ENCODE measurements at regions of chr9 and their contacts with region 1.

Region 1: DNA sequence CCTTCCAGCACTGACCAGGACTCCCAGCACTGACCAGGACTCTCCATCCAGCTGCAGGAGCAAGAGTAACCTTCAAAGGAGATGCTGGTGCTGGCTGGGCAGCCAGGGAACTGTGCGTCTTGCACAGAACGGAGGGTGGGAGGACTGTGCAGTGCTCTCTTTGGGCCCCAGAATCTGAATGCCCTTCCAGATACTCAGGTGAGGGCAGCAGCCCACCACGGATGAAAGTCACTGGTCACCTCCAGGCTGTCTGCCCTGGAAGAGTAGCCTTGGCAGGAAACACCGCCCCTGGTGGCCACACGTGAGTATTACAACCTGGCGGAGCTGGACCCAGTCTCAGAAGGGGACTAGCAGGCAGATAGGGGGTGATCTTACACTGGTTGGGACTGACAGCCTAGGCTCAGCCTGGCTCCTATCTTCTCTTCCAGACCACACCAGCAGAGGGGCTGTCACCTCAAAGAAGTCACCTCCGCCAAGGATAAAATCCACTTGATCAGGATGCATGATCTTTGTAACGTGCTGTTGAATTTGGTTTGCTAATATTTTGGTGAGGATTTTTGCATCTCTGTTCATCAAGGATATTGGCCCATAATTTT is 4.8 kb upstream of the SARDH start:
- DNase-seq: peak; percentile 84 to 99
- H3K4me3 ChIP-seq: no peak overlapping the region
- H3K27ac ChIP-seq: no peak overlapping the region
- H3K4me1 ChIP-seq: peaks cover 0 to 10% (median 5%) of the 10 kb centered on the region in 4 experiments; a peak in 6 of 7 replicates
- H3K27me3 ChIP-seq: no peaks in the 10 kb centered on the region
- CTCF ChIP-seq: peak in 2 of 3 experiments; percentile 99 to 100; a peak in 3 of 4 replicates
- EP300 ChIP-seq: no peak
- POLR2A ChIP-seq: no peak
- RAD21 ChIP-seq: peak; percentile 79 to 88

Region 2: GRCh38 chr9:133505186-133505830 is 237.6 kb before region 1 on chr9:
- CTCF ChIA-PET with region 1: no interaction called
- POLR2A ChIA-PET with region 1: no interaction called
- DNase-seq: no peak
- H3K4me3 ChIP-seq: no peak overlapping the region
- H3K27ac ChIP-seq: no peak overlapping the region
- H3K4me1 ChIP-seq: peaks cover 0 to 14% (median 12%) of the 10 kb centered on the region in 4 experiments; a peak in 6 of 7 replicates
- H3K27me3 ChIP-seq: peaks cover 0 to 2% (median 0%) of the 10 kb centered on the region in 4 experiments; a peak in 1 of 7 replicates
- CTCF ChIP-seq: no peak
- EP300 ChIP-seq: no peak
- POLR2A ChIP-seq: no peak
- RAD21 ChIP-seq: 0 out of 4 replicates have a peak, but pooled peaks of 1 of the 2 experiments have one; percentile 1

Region 3: GRCh38 chr9:133527444-133527920 is 215.5 kb before region 1 on chr9:
- CTCF ChIA-PET with region 1: interaction called, 15 read pairs
- POLR2A ChIA-PET with region 1: no interaction called
- DNase-seq: no peak
- H3K4me3 ChIP-seq: no peak overlapping the region; a peak in 1 of 8 replicates
- H3K27ac ChIP-seq: no peak overlapping the region
- H3K4me1 ChIP-seq: peaks cover 4 to 33% (median 30%) of the 10 kb centered on the region in 4 experiments
- H3K27me3 ChIP-seq: peaks cover 0 to 5% (median 2%) of the 10 kb centered on the region in 4 experiments; a peak in 4 of 7 replicates
- CTCF ChIP-seq: no peak
- EP300 ChIP-seq: no peak
- POLR2A ChIP-seq: no peak
- RAD21 ChIP-seq: no peak

Region 4: GRCh38 chr9:133731876-133732638 is 10.9 kb before region 1 on chr9:
- CTCF ChIA-PET with region 1: interaction called, 25 read pairs
- POLR2A ChIA-PET with region 1: no interaction called
- DNase-seq: no peak
- H3K4me3 ChIP-seq: no peak overlapping the region
- H3K27ac ChIP-seq: no peak overlapping the region
- H3K4me1 ChIP-seq: peaks cover 0 to 14% (median 9%) of the 10 kb centered on the region in 4 experiments; a peak in 5 of 7 replicates
- H3K27me3 ChIP-seq: no peaks in the 10 kb centered on the region
- CTCF ChIP-seq: no peak
- EP300 ChIP-seq: no peak
- POLR2A ChIP-seq: no peak
- RAD21 ChIP-seq: no peak

Region 5: DNA sequence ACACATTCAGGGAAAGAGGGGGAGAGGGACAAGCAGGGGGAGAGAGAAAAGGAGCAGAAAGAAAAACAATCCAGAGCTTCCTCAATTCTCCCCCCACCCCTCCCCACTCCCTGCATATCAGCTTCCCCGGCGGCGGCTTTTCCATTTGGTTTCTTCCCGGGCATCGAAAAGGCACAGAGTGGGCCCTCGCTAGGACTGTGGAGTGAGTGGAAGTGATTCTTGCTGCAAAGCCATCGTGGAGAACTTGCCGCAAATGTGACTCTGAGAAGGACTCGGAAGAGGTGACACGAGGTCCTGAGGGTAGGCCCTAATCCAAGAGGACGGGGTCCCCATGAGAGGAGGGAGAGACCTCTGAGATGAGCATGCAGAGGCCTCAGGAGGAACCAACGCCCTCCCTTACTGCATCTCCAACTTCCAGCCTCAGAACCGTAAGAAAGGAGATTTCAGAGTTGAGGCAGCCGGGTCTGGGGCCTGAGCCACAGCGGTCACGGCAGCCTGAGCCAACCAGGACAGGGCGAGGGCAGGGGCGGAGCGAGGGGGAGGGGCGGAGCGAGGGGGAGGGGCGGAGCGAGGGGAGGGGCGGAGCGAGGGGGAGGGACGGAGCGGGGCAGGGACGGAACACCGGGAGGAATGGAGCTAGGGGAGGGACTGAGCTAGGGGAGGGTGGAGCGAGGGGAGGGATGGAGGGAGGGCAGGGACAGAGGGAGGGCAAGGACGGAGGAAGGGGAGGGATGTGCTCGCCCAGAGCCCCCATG is 16.4 kb after region 1 on chr9:
- CTCF ChIA-PET with region 1: interaction called, 39 read pairs
- POLR2A ChIA-PET with region 1: interaction called, 5 read pairs
- DNase-seq: peak in 1 of 2 experiments; percentile 63
- H3K4me3 ChIP-seq: no peak overlapping the region
- H3K27ac ChIP-seq: no peak overlapping the region
- H3K4me1 ChIP-seq: no peaks in the 10 kb centered on the region; a peak in 1 of 7 replicates
- H3K27me3 ChIP-seq: no peaks in the 10 kb centered on the region; a peak in 1 of 7 replicates
- CTCF ChIP-seq: no peak
- EP300 ChIP-seq: no peak
- POLR2A ChIP-seq: no peak
- RAD21 ChIP-seq: no peak

Region 6: DNA sequence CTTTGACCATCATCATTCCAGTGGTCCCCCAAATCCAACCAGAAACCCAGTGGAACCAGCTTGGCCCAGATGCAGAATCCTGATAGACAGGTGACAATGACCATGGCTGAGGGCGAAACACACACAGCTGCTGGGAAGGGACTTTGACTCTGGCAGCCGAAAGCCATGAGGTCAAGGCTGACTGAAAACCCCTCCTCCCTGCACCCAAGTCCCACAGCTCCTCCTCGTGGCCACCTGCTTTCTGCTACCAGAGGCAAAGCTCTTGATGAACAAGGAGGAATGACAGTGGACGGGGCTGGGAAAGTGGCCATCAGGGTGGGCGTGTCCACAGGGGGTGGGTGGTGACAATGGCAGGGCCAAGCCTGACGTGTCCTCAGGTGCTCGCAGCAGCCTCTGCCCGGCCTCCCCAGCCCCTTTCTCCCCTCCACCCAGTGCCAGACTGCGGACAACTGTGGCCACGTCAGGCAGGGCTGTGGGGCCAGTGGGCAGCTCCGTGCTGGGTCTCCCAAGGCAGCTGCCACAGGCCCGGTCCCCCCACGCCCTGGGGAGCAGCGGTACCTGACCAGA is 26.0 kb after region 1 on chr9:
- CTCF ChIA-PET with region 1: interaction called, 28 read pairs
- POLR2A ChIA-PET with region 1: no interaction called
- DNase-seq: peak in 1 of 2 experiments; percentile 63
- H3K4me3 ChIP-seq: no peak overlapping the region
- H3K27ac ChIP-seq: no peak overlapping the region
- H3K4me1 ChIP-seq: no peaks in the 10 kb centered on the region
- H3K27me3 ChIP-seq: no peaks in the 10 kb centered on the region
- CTCF ChIP-seq: peak; percentile 49 to 67 (median 65)
- EP300 ChIP-seq: no peak
- POLR2A ChIP-seq: no peak
- RAD21 ChIP-seq: peak; percentile 58 to 62

Region 7: DNA sequence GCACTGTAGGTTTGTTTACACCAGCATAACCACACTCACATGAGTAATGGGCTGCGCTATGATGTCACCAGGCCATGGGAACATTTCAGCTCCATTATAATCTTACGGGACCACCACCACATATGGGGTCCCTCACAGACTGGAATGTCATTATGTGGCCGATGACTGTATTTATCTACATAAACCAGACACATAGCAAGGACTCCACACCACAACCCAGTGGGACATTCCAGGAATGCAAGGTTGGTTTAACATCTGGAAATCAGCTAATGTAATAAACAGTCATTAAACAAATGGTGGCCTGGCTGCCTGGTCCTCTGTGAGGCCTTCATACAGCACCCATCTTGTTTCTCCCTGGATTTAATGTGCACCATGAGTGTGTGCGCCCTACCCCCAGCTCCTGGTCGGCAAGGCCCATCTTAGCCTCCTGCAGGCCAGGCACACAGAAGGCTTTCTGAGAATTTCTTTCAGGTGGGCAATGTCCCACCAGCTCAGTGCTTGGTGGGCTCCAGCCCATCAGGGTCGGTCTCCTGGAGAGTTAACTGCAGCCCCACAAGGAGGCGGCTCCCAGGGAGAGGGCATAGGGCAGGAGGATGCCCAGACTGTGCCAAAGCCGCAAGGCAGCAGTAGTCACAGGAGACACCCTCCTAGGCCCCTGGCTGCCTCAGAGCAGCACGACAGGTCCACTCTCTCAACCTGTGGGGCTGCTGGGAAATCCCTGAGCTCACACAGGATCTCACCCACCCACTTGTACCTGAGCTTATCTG is 31.1 kb after region 1 on chr9:
- CTCF ChIA-PET with region 1: interaction called, 44 read pairs
- POLR2A ChIA-PET with region 1: no interaction called
- DNase-seq: no peak
- H3K4me3 ChIP-seq: no peak overlapping the region
- H3K27ac ChIP-seq: no peak overlapping the region
- H3K4me1 ChIP-seq: no peaks in the 10 kb centered on the region
- H3K27me3 ChIP-seq: no peaks in the 10 kb centered on the region
- CTCF ChIP-seq: no peak
- EP300 ChIP-seq: no peak
- POLR2A ChIP-seq: no peak
- RAD21 ChIP-seq: no peak

Region 8: GRCh38 chr9:134025606-134026541 is 282.9 kb after region 1 on chr9:
- CTCF ChIA-PET with region 1: interaction called, 10 read pairs
- POLR2A ChIA-PET with region 1: no interaction called
- DNase-seq: peak in 1 of 2 experiments; percentile 77
- H3K4me3 ChIP-seq: peak overlapping the region; percentile 70 to 85 (median 79)
- H3K27ac ChIP-seq: no peak overlapping the region
- H3K4me1 ChIP-seq: peaks cover 0 to 4% (median 4%) of the 10 kb centered on the region in 4 experiments; a peak in 5 of 7 replicates
- H3K27me3 ChIP-seq: no peaks in the 10 kb centered on the region
- CTCF ChIP-seq: peak in 2 of 3 experiments; percentile 23 to 36; a peak in 3 of 4 replicates
- EP300 ChIP-seq: no peak
- POLR2A ChIP-seq: no peak
- RAD21 ChIP-seq: peak in 1 of 2 experiments; percentile 33; a peak in 1 of 4 replicates